ENCODE measurements at regions of chr10 and their contacts with region 1.

Region 1: DNA sequence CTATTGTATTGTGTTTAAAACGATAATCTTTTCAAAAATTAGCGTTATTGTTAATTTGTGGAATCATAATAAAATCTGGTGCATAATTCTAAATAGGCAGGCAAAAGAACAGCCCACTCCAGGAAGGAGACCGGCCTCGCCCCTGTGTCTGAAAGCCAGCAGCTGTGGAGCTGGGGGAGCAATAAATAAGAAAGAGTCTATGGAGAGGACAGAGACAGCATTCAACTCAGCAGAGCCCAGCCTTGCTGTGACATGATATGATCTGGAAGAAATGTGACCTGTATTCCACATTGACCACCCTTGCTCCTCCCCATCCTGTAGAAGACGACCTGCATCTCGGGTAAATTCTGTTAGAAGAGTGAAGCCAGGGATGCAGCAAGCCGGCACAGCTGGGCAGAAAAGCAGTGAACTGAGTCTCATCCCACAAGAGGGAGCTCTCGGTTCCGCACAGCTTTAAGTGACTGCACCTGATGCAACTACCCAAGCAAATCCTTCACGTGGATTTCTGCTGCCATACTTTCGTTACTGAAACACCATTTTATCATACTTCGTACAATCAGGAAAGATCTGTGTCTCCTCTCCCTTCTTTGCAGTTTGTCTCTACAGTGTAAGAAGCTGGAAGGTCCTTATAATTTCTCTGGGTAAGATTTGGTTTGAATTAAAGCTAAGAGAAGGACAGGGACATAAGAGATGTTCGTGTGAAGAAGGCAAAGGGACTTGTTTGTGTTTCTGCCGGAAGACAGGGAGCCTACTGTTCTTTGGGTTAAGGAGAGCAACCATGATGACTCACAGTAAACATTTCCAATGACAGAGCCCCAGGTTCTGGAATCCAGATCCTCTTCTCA is 427.1 kb downstream of the GPAM start:
- DNase-seq: peak; percentile 46
- ATAC-seq: peak; percentile 98
- H3K4me3 ChIP-seq: no peak overlapping the region; a peak in 1 of 6 replicates
- H3K27ac ChIP-seq: no peak overlapping the region
- H3K4me1 ChIP-seq: peaks cover 10% of the 10 kb centered on the region
- H3K27me3 ChIP-seq: no peaks in the 10 kb centered on the region
- CTCF ChIP-seq: peak; percentile 82
- EP300 ChIP-seq: no peak
- POLR2A ChIP-seq: no peak
- RAD21 ChIP-seq: peak; percentile 37; the same call in 1 of the 2 replicates

Region 2: DNA sequence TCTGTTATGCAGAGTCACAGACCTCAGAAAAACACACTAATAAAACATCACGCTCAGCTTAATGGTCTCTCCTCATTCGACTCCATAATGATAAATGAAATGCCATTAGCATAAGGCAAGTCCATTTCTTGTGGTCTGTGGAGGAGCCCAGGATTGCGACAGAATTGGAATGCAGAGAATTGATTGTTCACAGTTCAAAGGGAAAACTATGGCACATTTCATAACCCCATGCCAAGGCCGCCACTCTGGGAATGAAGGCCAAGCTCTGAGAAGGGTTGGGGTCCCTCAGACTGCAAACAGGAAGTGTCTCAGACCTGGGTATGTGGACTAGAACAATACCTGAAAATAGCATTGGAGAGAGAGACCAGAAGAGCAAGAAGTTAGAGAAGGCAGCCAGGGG is 280.7 kb before region 1 on chr10:
- CTCF ChIA-PET with region 1: no interaction called
- POLR2A ChIA-PET with region 1: no interaction called
- in situ Hi-C with region 1: no loop called
- intact Hi-C with region 1: no loop called
- DNase-seq: peak; percentile 86
- ATAC-seq: peak; percentile 90
- H3K4me3 ChIP-seq: no peak overlapping the region
- H3K27ac ChIP-seq: peak overlapping the region; percentile 2
- H3K4me1 ChIP-seq: peaks cover 27% of the 10 kb centered on the region
- H3K27me3 ChIP-seq: no peaks in the 10 kb centered on the region
- CTCF ChIP-seq: no peak
- EP300 ChIP-seq: peak; percentile 77 to 81; a peak in 3 of 4 replicates
- POLR2A ChIP-seq: no peak
- RAD21 ChIP-seq: no peak

Region 3: GRCh38 chr10:111856631-111857030 is 100.2 kb after region 1 on chr10:
- CTCF ChIA-PET with region 1: interaction called, 3 read pairs
- POLR2A ChIA-PET with region 1: no interaction called
- in situ Hi-C with region 1: no loop called
- intact Hi-C with region 1: loop called (anchors 1 kb)
- DNase-seq: peak; percentile 4
- ATAC-seq: 0 out of 3 replicates have a peak, but pooled peaks have one; percentile 44
- H3K4me3 ChIP-seq: no peak overlapping the region
- H3K27ac ChIP-seq: no peak overlapping the region
- H3K4me1 ChIP-seq: no peaks in the 10 kb centered on the region
- H3K27me3 ChIP-seq: peaks cover 0 to 1% of the 10 kb centered on the region in 2 experiments; a peak in 1 of 5 replicates
- CTCF ChIP-seq: peak; percentile 44
- EP300 ChIP-seq: no peak
- POLR2A ChIP-seq: no peak
- RAD21 ChIP-seq: no peak

Region 4: DNA sequence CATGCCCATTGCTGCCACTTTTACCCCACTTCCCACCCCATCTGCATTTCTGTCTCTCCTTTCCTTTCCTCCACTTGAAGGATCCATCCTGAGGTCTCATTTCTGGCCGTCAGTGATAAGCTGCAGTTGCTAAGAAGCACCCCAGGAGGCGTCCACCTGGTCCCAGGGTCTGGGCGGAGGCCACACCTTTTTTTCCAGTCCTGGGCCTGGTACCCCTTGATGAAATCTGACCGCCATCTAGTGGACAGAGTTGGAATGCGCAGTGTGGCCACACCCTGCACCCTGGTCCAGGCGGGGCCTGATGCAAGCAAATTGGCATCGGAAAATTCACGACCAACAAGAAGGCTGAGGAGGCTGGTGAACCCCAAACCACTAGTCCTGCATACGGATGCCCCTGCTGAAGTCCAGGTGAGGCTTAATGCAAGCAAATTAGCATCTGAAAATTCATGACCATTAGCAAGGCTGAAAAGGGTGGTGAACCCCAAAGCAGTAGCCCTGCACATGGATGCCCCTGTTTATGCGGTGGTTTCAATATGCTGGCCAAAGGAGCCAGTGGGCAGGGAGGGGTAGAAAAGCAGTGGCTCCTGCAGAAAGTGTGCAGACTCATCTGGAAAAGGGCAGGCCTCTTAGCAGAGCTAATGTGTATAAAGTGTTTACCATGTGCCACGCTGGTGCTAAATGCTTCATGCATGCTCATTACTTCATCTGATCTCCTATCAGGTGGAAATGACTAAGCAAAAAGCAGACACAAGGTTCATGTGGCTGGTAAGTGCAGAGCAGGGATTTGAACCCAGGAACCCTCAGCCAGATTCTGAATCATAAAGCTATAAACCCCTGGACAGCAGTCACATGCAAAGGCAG is 383.9 kb after region 1 on chr10:
- CTCF ChIA-PET with region 1: interaction called, 5 read pairs
- POLR2A ChIA-PET with region 1: interaction called, 6 read pairs
- in situ Hi-C with region 1: loop called (anchors 10 kb)
- intact Hi-C with region 1: loop called (anchors 5 kb)
- DNase-seq: peak; percentile 78
- ATAC-seq: peak; percentile 80
- H3K4me3 ChIP-seq: no peak overlapping the region
- H3K27ac ChIP-seq: no peak overlapping the region
- H3K4me1 ChIP-seq: no peaks in the 10 kb centered on the region
- H3K27me3 ChIP-seq: no peaks in the 10 kb centered on the region
- CTCF ChIP-seq: peak; percentile 86
- EP300 ChIP-seq: no peak
- POLR2A ChIP-seq: no peak
- RAD21 ChIP-seq: peak; percentile 76

Measured in HepG2 (cell line).